Esophagus muscularis mucosa (tissue), 4 donors: ENCODE measurements at regions of chr10 and their contacts with region 1.

Region 1: GRCh38 chr10:79562135-79562756 is 2.0 kb upstream of the SFTPA2 start:
- DNase-seq: no peak
- H3K4me3 ChIP-seq: no peak overlapping the region
- H3K27ac ChIP-seq: no peak overlapping the region
- H3K4me1 ChIP-seq: peaks cover 0 to 8% (median 5%) of the 10 kb centered on the region in 4 donors
- H3K27me3 ChIP-seq: peaks cover 0 to 8% (median 0%) of the 10 kb centered on the region in 4 donors
- CTCF ChIP-seq: peak; percentile 60 to 86 (median 63)
- EP300 ChIP-seq: no peak
- POLR2A ChIP-seq: no peak

Region 2: DNA sequence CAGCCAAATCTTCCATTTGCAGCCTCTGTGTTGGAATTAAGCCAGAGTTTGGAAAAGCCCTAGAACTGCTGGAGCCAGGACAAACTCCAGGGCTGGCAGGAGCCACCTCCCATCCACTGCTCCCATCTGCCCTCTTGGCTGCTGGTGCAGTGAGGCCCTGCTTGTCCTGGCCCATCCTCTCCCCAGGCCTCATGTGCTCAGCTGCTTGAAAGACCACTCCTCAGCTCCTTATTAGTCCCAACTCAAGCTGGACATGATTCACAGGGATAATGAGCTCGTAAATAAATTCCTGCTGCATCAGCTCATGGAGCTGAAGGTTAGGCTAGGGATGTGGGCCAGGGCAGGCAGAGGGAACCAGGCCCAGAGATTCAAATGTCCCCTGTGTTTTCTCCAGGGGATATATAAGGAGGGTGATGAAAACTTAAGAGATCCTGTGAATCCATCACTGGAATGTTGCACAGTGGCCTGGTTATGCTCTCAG is 1245.8 kb before region 1 on chr10:
- intact Hi-C with region 1: no loop called
- DNase-seq: peak; percentile 88
- H3K4me3 ChIP-seq: no peak overlapping the region
- H3K27ac ChIP-seq: peak overlapping the region; percentile 50 to 72 (median 60)
- H3K4me1 ChIP-seq: peaks cover 14 to 31% (median 22%) of the 10 kb centered on the region in 4 donors
- H3K27me3 ChIP-seq: no peaks in the 10 kb centered on the region
- CTCF ChIP-seq: no peak
- EP300 ChIP-seq: no peak
- POLR2A ChIP-seq: no peak

Region 3: GRCh38 chr10:79929409-79929904 is 367.2 kb after region 1 on chr10:
- intact Hi-C with region 1: loop called (anchors 10 kb)
- DNase-seq: no peak
- H3K4me3 ChIP-seq: no peak overlapping the region
- H3K27ac ChIP-seq: no peak overlapping the region
- H3K4me1 ChIP-seq: peaks cover 5 to 16% (median 11%) of the 10 kb centered on the region in 4 donors
- H3K27me3 ChIP-seq: peaks cover 0 to 3% (median 0%) of the 10 kb centered on the region in 4 donors
- CTCF ChIP-seq: peak; percentile 86 to 93 (median 93)
- EP300 ChIP-seq: no peak
- POLR2A ChIP-seq: no peak